MCF 10A (cell line): ENCODE measurements at regions of chr22 and their contacts with region 1.

Region 1: GRCh38 chr22:36369922-36370791 is 17.6 kb downstream of the MYH9 start:
- DNase-seq: peak; percentile 82
- H3K4me3 Mint-ChIP-seq: peak overlapping the region; percentile 54
- H3K27ac Mint-ChIP-seq: peak overlapping the region; percentile 79
- H3K4me1 Mint-ChIP-seq: peaks cover 64% of the 10 kb centered on the region
- H3K27me3 Mint-ChIP-seq: no peaks in the 10 kb centered on the region
- CTCF ChIP-seq: no peak

Region 2: GRCh38 chr22:36258701-36259614 is 111.2 kb before region 1 on chr22:
- CTCF ChIA-PET with region 1: no interaction called
- POLR2A ChIA-PET with region 1: no interaction called
- intact Hi-C with region 1: no loop called
- DNase-seq: no peak
- H3K4me3 Mint-ChIP-seq: no peak overlapping the region
- H3K27ac Mint-ChIP-seq: peak overlapping the region; percentile 7
- H3K4me1 Mint-ChIP-seq: peaks cover 14% of the 10 kb centered on the region
- H3K27me3 Mint-ChIP-seq: no peaks in the 10 kb centered on the region
- CTCF ChIP-seq: no peak

Region 3: GRCh38 chr22:36352803-36353507 is 17.2 kb before region 1 on chr22:
- CTCF ChIA-PET with region 1: interaction called, 3 read pairs
- POLR2A ChIA-PET with region 1: interaction called, 30 read pairs
- intact Hi-C with region 1: no loop called
- DNase-seq: peak; percentile 83
- H3K4me3 Mint-ChIP-seq: peak overlapping the region; percentile 55
- H3K27ac Mint-ChIP-seq: peak overlapping the region; percentile 83
- H3K4me1 Mint-ChIP-seq: peaks cover 64% of the 10 kb centered on the region
- H3K27me3 Mint-ChIP-seq: no peaks in the 10 kb centered on the region
- CTCF ChIP-seq: no peak